ENCODE measurements at regions of chr13 and their contacts with region 1.

Region 1: DNA sequence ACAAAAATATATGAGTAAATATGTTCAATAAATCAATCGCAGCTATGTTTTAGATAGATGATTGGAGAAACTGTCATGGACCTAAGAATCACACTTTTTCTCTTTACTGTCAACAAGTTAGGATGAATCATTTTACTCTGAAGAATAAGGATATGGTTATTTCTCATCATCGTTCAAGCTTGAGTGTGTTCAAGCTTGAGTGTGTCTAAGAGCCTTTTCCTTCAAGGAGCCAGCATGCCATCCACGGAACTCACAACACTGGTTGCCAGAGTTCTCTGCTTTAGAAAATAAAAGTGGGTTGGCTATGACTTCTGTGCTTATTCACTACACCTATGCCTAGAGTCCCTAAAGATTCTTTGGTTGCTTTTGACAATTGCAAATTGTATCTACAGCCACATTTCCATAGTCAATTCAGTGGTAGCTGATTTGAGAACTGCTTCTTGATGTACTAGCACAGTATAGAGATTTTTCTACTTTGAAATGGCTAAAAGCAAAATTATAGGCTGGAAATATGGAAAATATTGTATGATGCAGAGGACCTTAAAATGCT is 58.1 kb upstream of the SCEL start:
- DNase-seq: peak; percentile 57 to 62
- H3K4me3 ChIP-seq: no peak overlapping the region
- H3K27ac ChIP-seq: peak overlapping the region in 1 of 3 donors; percentile 33
- H3K4me1 ChIP-seq: peaks cover 5 to 14% of the 10 kb centered on the region in 2 donors
- H3K27me3 ChIP-seq: no peaks in the 10 kb centered on the region
- CTCF ChIP-seq: no peak
- POLR2A ChIP-seq: no peak

Region 2: DNA sequence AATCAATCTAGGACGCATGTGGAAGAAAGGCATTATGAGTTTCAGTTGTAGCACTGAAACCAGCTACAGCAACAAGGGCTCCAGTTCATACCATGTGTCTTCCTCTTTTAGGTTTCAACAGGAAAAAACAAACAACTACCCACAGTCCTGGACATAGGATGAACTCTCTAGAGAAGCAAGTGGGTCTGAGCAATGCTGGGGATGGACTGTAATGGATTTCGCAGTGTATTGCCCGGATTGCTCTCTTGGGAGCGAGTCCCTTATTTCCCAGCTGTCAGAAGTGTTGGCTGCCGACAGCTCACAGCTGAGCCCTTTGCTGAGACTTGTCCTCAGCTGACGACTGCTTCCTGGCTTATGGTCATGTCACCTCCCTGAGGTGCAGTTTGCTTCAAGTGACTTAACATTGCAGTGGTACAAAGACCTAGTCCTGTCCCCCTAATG is 138.4 kb before region 1 on chr13:
- intact Hi-C with region 1: loop called (anchors 10 kb)
- DNase-seq: no peak
- H3K4me3 ChIP-seq: no peak overlapping the region
- H3K27ac ChIP-seq: no peak overlapping the region
- H3K4me1 ChIP-seq: no peaks in the 10 kb centered on the region
- H3K27me3 ChIP-seq: no peaks in the 10 kb centered on the region
- CTCF ChIP-seq: no peak
- POLR2A ChIP-seq: no peak

Measured in thyroid gland (tissue), 4 donors.